Activated CD4-positive, alpha-beta memory T cell treated with anti-CD3 and anti-CD28 coated beads for 36 hours (primary cell): ENCODE measurements at regions of chr1 and their contacts with region 1.

Region 1: GRCh38 chr1:8702850-8703810 is 114.3 kb downstream of the RERE start:
- DNase-seq: peak; percentile 77
- H3K4me3 Mint-ChIP-seq: peak overlapping the region; percentile 78
- H3K27ac Mint-ChIP-seq: peak overlapping the region; percentile 34
- H3K4me1 Mint-ChIP-seq: peaks cover 27% of the 10 kb centered on the region
- H3K27me3 Mint-ChIP-seq: peaks cover 30% of the 10 kb centered on the region

Region 2: DNA sequence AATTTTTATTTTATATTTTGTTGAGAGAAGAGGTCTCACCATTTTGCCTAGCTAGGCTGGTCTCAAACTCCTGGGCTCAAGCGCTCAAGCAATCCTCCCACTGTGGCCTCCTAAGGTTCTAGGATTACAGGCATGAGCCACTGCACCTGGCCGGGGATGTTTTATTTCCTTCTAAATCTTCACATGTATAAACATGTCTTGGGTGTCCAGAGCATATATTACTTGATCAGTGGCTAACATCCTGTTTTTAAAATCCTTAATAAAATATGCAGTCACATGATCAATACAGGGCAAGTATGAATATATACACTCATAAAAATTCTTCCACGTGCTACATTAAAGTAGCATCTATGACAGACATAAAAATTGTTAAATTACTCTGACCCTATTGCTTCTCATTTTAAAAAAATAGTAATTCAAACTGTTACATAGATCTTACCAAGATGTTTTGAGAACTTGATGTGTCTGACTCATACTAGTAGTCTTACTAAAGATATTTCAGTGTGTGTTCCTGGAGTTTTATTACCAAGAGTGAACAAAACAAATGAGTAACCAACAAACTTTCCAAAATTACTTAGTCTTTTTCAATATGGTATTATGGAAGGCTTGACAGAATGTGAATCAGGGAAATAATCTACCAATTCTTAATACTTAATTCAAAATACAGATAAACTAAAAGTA is 162.7 kb before region 1 on chr1:
- CTCF ChIA-PET with region 1: no interaction called
- POLR2A ChIA-PET with region 1: no interaction called
- intact Hi-C with region 1: no loop called
- DNase-seq: no peak
- H3K4me3 Mint-ChIP-seq: no peak overlapping the region
- H3K27ac Mint-ChIP-seq: peak overlapping the region; percentile 69
- H3K4me1 Mint-ChIP-seq: peaks cover 40% of the 10 kb centered on the region
- H3K27me3 Mint-ChIP-seq: no peaks in the 10 kb centered on the region

Region 3: GRCh38 chr1:8560611-8561544 is 142.3 kb before region 1 on chr1:
- CTCF ChIA-PET with region 1: interaction called, 11 read pairs
- POLR2A ChIA-PET with region 1: no interaction called
- intact Hi-C with region 1: loop called (anchors 1 kb)
- DNase-seq: no peak
- H3K4me3 Mint-ChIP-seq: no peak overlapping the region
- H3K27ac Mint-ChIP-seq: peak overlapping the region; percentile 50
- H3K4me1 Mint-ChIP-seq: peaks cover 41% of the 10 kb centered on the region
- H3K27me3 Mint-ChIP-seq: no peaks in the 10 kb centered on the region

Region 4: DNA sequence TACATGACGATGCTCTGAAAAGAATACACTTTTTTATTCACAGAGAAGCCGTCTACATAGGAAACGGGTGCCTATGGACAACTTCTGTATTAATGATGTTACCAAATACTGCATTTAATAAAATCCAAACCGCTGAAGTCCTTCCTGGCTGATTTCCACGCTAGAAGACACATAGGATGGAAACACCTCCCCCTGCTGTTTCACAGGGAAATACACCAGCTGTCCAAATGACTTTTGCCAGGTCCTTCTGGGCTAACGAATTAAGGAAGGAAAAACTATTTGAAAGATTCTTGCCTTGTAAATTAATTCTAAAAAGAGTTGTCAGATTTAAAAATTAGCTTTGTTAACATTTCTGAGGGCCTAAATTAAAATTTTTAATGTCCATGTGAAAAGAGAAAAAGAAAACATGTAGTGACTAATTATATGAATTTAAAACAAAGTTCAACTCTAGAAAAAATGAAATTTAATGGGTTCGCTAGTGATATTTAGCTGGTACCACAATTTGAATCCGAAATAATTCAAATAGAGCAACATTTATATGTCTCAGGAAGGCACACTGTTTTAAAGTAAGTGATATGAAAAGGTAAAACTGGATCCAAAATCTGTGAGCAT is 31.7 kb before region 1 on chr1:
- CTCF ChIA-PET with region 1: interaction called, 10 read pairs
- POLR2A ChIA-PET with region 1: interaction called, 5 read pairs
- intact Hi-C with region 1: loop called (anchors 2 kb)
- DNase-seq: no peak
- H3K4me3 Mint-ChIP-seq: no peak overlapping the region
- H3K27ac Mint-ChIP-seq: no peak overlapping the region
- H3K4me1 Mint-ChIP-seq: peaks cover 43% of the 10 kb centered on the region
- H3K27me3 Mint-ChIP-seq: no peaks in the 10 kb centered on the region

Region 5: DNA sequence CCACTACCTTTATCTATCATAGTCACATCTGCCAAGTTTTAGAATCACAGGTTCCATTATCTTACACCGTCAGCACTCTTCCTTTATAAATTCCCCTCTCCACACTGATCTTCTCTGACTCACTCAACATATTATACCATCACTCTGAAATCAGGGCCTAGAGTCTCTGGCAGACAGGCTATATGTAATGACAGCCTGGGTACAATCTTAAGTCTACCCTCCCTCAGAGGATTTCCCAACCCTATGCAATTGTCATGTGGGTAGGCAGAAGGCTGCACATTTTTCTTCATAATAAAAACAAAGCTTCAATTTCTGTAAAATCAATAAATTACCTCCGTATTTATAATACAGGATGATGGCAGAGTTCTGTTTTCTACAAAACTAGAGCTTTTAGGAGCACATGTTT is 23.7 kb before region 1 on chr1:
- CTCF ChIA-PET with region 1: interaction called, 10 read pairs
- POLR2A ChIA-PET with region 1: interaction called, 5 read pairs
- intact Hi-C with region 1: loop called (anchors 2 kb)
- DNase-seq: no peak
- H3K4me3 Mint-ChIP-seq: no peak overlapping the region
- H3K27ac Mint-ChIP-seq: no peak overlapping the region
- H3K4me1 Mint-ChIP-seq: peaks cover 33% of the 10 kb centered on the region
- H3K27me3 Mint-ChIP-seq: no peaks in the 10 kb centered on the region

Region 6: GRCh38 chr1:8727809-8728213 is 24.7 kb after region 1 on chr1:
- CTCF ChIA-PET with region 1: interaction called, 18 read pairs
- POLR2A ChIA-PET with region 1: interaction called, 9 read pairs
- intact Hi-C with region 1: no loop called
- DNase-seq: no peak
- H3K4me3 Mint-ChIP-seq: no peak overlapping the region
- H3K27ac Mint-ChIP-seq: no peak overlapping the region
- H3K4me1 Mint-ChIP-seq: peaks cover 14% of the 10 kb centered on the region
- H3K27me3 Mint-ChIP-seq: no peaks in the 10 kb centered on the region

Region 7: GRCh38 chr1:8817406-8818324 is 114.5 kb after region 1 on chr1 and contains the start of gene RERE:
- CTCF ChIA-PET with region 1: no interaction called
- POLR2A ChIA-PET with region 1: interaction called, 3 read pairs
- intact Hi-C with region 1: loop called (anchors 1 kb)
- DNase-seq: peak; percentile 97
- H3K4me3 Mint-ChIP-seq: peak within 1 kb of the TSS; percentile 86
- H3K27ac Mint-ChIP-seq: peak within 1 kb of the TSS; percentile 91
- H3K4me1 Mint-ChIP-seq: peaks cover 46% of the 10 kb centered on the region
- H3K27me3 Mint-ChIP-seq: peaks cover 4% of the 10 kb centered on the region
- total RNA-seq, gene RERE: 45.0 to 50.5 TPM